ENCODE measurements at regions of chr2 and their contacts with region 1.

Region 1: GRCh38 chr2:172465417-172466334 is 38.3 kb downstream of the ITGA6 start:
- DNase-seq: peak; percentile 75
- H3K4me3 ChIP-seq: peak overlapping the region in 3 of 4 donors; percentile 18 to 20 (median 18)
- H3K27ac ChIP-seq: no peak overlapping the region
- H3K4me1 ChIP-seq: no peaks in the 10 kb centered on the region
- H3K27me3 ChIP-seq: peaks cover 0 to 18% (median 3%) of the 10 kb centered on the region in 3 donors
- CTCF ChIP-seq: peak; percentile 33 to 82 (median 77)
- EP300 ChIP-seq: no peak
- POLR2A ChIP-seq: no peak

Region 2: DNA sequence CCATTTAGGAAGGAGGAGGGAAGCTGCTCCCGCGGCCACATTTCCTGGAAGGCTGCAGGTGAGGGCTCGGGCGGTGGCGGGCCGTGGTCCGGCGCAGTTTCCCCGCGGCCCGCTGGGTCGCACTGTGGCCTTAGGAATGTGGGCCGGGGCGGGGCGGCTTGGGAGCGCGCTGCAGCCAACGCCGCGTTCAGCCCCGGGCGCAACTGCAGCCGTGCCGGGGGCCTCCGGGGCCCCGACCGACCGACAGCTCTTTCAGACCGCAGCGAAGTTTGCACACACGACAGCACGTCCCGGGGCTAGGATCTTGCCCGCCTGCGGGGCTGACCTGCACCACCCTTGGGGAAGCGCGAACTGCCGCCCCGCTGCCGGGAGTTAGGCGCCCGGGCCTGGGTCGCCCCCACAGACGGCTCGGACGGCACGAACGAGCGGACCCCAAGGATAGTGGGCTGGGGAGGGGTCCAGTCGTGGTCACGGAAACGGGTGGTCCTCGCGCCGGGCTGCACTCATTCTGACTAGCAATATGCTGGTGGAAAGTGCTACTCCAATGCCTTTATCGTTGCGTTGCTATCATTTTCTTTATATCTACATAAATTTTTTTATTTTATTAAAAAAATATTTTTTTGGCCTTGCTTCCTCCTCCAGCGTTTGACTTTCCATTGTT is 293.0 kb before region 1 on chr2:
- intact Hi-C with region 1: loop called (anchors 1 kb)
- DNase-seq: peak; percentile 69
- H3K4me3 ChIP-seq: peak overlapping the region; percentile 11 to 51 (median 46)
- H3K27ac ChIP-seq: no peak overlapping the region
- H3K4me1 ChIP-seq: peaks cover 0 to 9% (median 6%) of the 10 kb centered on the region in 4 donors
- H3K27me3 ChIP-seq: peaks cover 0 to 19% (median 9%) of the 10 kb centered on the region in 3 donors
- CTCF ChIP-seq: peak; percentile 26 to 74 (median 56)
- EP300 ChIP-seq: no peak
- POLR2A ChIP-seq: no peak

Measured in sigmoid colon (tissue), 7 donors.